Activated CD4-positive, alpha-beta T cell treated with anti-CD3 and anti-CD28 coated beads, Interleukin-2, amount 10 ng/mL, durations not matched to agents 24 days and 14 days (primary cell): ENCODE measurements at regions of chr3 and their contacts with region 1.

Region 1: GRCh38 chr3:33883538-33883950 is 85.1 kb downstream of the PDCD6IP start:
- DNase-seq: peak; percentile 75
- H3K4me3 Mint-ChIP-seq: no peak overlapping the region
- H3K27ac Mint-ChIP-seq: no peak overlapping the region
- H3K4me1 Mint-ChIP-seq: peaks cover 4% of the 10 kb centered on the region
- H3K27me3 Mint-ChIP-seq: no peaks in the 10 kb centered on the region

Region 2: GRCh38 chr3:34683851-34684250 is 800.3 kb after region 1 on chr3:
- intact Hi-C with region 1: loop called (anchors 5 kb)
- DNase-seq: peak; percentile 69
- H3K4me3 Mint-ChIP-seq: no peak overlapping the region
- H3K27ac Mint-ChIP-seq: no peak overlapping the region
- H3K4me1 Mint-ChIP-seq: no peaks in the 10 kb centered on the region
- H3K27me3 Mint-ChIP-seq: no peaks in the 10 kb centered on the region